Left cardiac atrium (tissue), 4 donors: ENCODE measurements at regions of chr1 and their contacts with region 1.

Region 1: GRCh38 chr1:180482425-180483275 is 19.7 kb downstream of the ACBD6 start:
- DNase-seq: no peak
- ATAC-seq: no peak

Region 2: DNA sequence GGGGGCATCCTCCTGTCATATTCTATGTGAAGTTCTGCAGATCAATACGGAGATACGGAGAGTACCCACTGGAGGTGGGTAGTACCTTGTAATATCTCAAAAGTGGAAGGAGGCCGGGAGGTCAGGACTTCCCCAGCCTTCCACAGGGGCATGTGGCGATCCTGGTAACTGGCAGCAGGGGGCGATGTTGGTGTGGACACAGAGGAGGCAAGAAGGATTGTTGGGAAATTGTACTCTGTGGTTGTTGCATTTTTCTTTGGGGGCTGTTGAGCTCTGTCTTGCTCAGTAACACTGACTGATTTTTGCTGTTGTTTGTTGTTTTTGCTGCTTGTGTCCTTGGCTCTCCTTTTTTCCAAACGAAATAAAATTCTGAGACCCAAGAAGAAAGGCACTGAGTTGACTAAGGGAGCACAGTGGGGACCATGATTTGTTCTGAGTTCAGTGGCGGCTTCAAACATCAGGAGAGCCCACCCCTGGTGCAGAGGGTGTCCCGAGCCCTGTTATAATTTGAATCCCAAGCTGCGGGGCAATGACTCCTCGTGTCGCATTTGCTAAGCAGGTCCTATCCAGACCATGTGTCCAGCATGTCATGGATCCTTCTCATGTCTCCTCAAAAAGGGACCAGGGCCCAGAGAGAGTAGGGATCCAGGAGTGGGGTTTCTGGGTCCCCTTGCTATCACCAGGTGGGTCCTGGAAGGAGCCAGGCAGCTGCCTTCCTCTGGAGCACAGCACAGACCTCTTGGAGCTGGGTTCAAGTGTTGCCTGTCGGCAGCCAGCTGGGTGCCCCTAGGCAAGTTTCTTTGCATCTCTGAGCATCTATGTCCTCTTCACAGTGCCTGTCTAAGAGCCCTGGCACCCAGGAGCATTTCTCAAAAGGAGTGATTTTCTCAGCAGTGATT is 229.8 kb before region 1 on chr1:
- intact Hi-C with region 1: loop called (anchors 5 kb)
- DNase-seq: peak; percentile 69
- ATAC-seq: peak; percentile 54 to 56

Region 3: GRCh38 chr1:180358649-180359048 is 124.0 kb before region 1 on chr1:
- intact Hi-C with region 1: no loop called
- DNase-seq: peak; percentile 45
- ATAC-seq: peak; percentile 67 to 70